HEK293 (cell line): ENCODE measurements at regions of chr2 and their contacts with region 1.

Region 1: DNA sequence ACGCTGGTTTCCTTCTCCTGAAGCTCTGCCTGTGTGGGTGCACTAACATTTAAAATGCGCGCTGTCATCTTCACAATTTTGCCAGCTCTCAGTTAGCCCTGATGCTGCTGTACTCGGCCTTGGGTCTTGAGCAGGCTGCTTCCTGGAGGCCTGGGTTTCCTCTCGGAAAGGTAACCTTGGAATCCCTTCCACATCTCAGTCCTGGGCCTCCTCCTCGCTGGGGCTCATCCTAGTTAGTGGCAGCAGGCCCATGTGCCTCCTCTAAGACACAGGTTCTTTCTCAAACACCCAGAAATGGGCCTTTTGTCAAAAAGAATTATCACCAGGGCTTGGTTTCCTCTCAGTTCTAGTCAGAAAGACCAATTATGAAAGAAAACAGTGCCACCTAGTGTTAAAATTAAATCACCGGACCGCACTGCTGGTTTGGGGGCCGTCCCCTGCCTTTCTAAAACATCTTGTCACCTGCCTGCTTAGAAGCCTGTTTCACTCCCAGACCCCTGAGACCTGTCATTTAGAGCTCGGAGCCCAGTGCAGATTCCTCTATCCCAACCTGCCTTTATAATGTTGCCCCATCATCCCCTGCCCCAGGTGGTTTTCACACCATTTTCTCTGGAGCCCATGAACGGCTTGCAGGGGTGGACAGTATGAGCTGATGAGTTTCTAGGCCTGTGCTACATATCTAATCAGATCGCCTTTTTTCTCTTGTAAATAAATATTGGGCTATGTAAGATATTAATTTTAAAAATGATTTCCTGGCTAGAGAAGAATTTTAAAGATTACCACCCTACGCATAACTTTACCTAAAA is 42.4 kb downstream of the HK2 start:
- H3K4me3 ChIP-seq: no peak overlapping the region
- H3K27ac ChIP-seq: no peak overlapping the region
- H3K4me1 ChIP-seq: no peaks in the 10 kb centered on the region
- CTCF ChIP-seq: peak; percentile 50; the same call in 1 of the 2 replicates

Region 2: GRCh38 chr2:74690571-74690970 is 185.7 kb before region 1 on chr2:
- CTCF ChIA-PET with region 1: interaction called, 66 read pairs
- POLR2A ChIA-PET with region 1: interaction called, 3 read pairs
- H3K4me3 ChIP-seq: no peak overlapping the region
- H3K27ac ChIP-seq: no peak overlapping the region
- H3K4me1 ChIP-seq: no peaks in the 10 kb centered on the region
- CTCF ChIP-seq: peak; percentile 68; the same call in 1 of the 2 replicates

Region 3: GRCh38 chr2:74833418-74834233 is 42.7 kb before region 1 on chr2 and contains the start of gene HK2:
- CTCF ChIA-PET with region 1: interaction called, 39 read pairs
- POLR2A ChIA-PET with region 1: interaction called, 3 read pairs
- H3K4me3 ChIP-seq: peak within 1 kb of the TSS; percentile 55
- H3K27ac ChIP-seq: peak within 1 kb of the TSS; percentile 71; the same call in 1 of the 2 replicates
- H3K4me1 ChIP-seq: no peaks in the 10 kb centered on the region
- CTCF ChIP-seq: no peak

Region 4: DNA sequence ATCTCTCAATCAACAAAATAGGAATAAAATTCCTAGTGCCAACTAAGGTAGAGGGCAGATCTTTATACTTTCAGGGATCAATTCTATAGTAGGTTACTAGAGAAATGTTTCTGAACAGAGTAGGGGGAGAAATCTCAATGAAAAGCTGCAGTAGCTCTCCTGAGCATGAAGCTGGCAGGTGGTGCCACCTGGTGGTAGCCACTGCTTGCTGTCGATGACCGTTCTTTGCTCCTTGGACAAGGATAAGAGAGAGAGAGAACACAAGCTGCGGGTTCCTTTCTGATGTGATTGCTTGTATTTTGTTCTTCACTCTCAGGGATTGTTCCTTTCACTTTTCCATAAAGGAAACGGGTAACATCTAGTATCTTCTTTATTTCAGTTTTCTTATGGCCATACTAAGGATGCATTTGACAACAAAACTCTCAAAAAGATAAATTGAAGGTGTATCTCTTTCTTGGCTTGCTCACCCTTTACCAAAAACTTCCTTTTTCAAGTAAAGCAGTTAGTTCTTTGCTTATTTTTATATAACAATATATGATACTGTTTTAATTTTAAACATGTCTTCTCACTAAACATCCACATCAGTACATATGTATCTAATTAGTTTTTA is 751.7 kb after region 1 on chr2:
- CTCF ChIA-PET with region 1: no interaction called
- POLR2A ChIA-PET with region 1: no interaction called
- H3K4me3 ChIP-seq: no peak overlapping the region
- H3K27ac ChIP-seq: no peak overlapping the region
- H3K4me1 ChIP-seq: no peaks in the 10 kb centered on the region
- CTCF ChIP-seq: peak; percentile 61; the same call in 1 of the 2 replicates